ENCODE measurements at regions of chr16 and their contacts with region 1.

Region 1: GRCh38 chr16:82699711-82700495 is 73.1 kb downstream of the CDH13 start:
- DNase-seq: no peak
- ATAC-seq: peak; percentile 67 to 91 (median 82)
- H3K4me3 ChIP-seq: no peak overlapping the region
- H3K27ac ChIP-seq: peak overlapping the region; percentile 76
- H3K4me1 ChIP-seq: peaks cover 49% of the 10 kb centered on the region
- H3K27me3 ChIP-seq: no peaks in the 10 kb centered on the region
- CTCF ChIP-seq: no peak

Region 2: GRCh38 chr16:82612263-82612662 is 87.6 kb before region 1 on chr16:
- intact Hi-C with region 1: no loop called
- DNase-seq: no peak
- ATAC-seq: no peak
- H3K4me3 ChIP-seq: no peak overlapping the region
- H3K27ac ChIP-seq: no peak overlapping the region
- H3K4me1 ChIP-seq: no peaks in the 10 kb centered on the region
- H3K27me3 ChIP-seq: no peaks in the 10 kb centered on the region
- CTCF ChIP-seq: no peak

Region 3: DNA sequence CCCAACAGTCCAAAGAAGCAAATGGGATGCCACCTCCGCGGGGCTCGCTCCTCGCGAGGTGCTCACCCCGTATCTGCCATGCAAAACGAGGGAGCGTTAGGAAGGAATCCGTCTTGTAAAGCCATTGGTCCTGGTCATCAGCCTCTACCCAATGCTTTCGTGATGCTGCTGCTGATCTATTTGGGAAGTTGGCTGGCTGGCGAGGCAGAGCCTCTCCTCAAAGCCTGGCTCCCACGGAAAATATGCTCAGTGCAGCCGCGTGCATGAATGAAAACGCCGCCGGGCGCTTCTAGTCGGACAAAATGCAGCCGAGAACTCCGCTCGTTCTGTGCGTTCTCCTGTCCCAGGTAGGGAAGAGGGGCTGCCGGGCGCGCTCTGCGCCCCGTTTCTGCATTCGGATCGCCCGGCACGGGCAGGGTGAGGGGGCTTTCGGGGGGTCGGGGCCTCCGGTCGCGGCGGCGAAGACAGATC is 73.1 kb before region 1 on chr16 and contains the start of gene CDH13:
- intact Hi-C with region 1: no loop called
- DNase-seq: peak; percentile 27 to 67
- ATAC-seq: peak; percentile 12 to 55 (median 40)
- H3K4me3 ChIP-seq: peak within 1 kb of the TSS; percentile 92
- H3K27ac ChIP-seq: peak within 1 kb of the TSS; percentile 99
- H3K4me1 ChIP-seq: peaks cover 44% of the 10 kb centered on the region
- H3K27me3 ChIP-seq: no peaks in the 10 kb centered on the region
- CTCF ChIP-seq: no peak
- total RNA-seq, gene CDH13: 22.8 to 30.7 (median 29.5) TPM

Region 4: DNA sequence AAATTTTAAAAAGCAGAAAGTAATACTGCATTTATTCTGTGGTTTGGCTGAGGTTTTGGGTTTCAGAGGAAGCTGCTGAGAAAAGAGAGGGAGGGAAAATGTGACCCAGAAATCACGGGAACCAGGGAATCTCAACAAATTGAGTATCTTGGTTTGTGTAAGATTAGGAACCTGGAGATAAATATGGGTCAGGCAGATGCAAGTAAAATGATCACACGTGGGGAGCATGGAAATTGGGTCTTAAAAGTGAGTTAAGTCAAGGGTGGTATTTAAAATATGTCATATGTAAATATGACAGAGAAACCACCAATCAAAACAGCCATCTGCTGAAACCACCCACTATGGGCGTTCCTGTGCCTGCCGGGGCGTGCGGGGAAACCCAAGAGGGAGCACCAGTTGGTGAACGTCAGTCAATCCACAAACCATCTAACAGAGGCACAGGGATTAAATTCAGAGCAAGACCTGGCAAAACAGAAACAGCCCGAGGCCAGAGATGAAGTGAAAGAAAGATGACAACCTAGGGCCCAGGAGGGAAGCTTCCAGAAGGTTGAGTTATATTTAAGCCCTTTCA is 39.7 kb before region 1 on chr16:
- intact Hi-C with region 1: loop called in 1 of 2 experiments (anchors 5 kb)
- DNase-seq: peak; percentile 72 to 89
- ATAC-seq: peak; percentile 94 to 98 (median 96)
- H3K4me3 ChIP-seq: peak overlapping the region; percentile 57
- H3K27ac ChIP-seq: peak overlapping the region; percentile 91
- H3K4me1 ChIP-seq: peaks cover 39% of the 10 kb centered on the region
- H3K27me3 ChIP-seq: no peaks in the 10 kb centered on the region
- CTCF ChIP-seq: no peak

Region 5: GRCh38 chr16:82730901-82731300 is 31.0 kb after region 1 on chr16:
- intact Hi-C with region 1: loop called in 1 of 2 experiments (anchors 1 kb)
- DNase-seq: no peak
- ATAC-seq: no peak
- H3K4me3 ChIP-seq: no peak overlapping the region
- H3K27ac ChIP-seq: no peak overlapping the region
- H3K4me1 ChIP-seq: peaks cover 39% of the 10 kb centered on the region
- H3K27me3 ChIP-seq: no peaks in the 10 kb centered on the region
- CTCF ChIP-seq: no peak

Measured in psoas muscle (tissue), 8 donors.